ENCODE measurements at regions of chr12 and their contacts with region 1.

Region 1: DNA sequence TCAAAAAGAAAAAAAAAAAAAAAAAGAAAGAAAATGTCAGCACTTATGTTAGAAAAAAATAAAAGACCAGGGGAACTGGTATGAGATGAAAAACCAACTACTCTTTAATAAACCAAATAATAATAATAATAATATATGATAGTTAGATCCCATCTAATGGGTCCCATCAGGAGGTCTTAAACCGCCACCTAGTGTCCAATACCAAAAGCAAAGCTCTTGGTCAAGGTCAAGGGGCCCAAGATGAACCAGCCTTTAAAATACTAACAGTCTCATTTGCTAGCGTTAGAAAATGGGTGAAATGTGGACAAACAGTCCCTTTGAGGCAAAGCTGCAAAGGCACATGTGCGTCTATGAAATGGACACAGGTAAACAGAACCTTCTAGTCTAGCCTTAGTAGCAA is 12.3 kb downstream of the BRAP start:
- DNase-seq: peak in 1 of 5 donors; percentile 26
- H3K4me3 ChIP-seq: no peak overlapping the region
- H3K27ac ChIP-seq: no peak overlapping the region
- H3K4me1 ChIP-seq: no peaks in the 10 kb centered on the region
- H3K27me3 ChIP-seq: no peaks in the 10 kb centered on the region
- CTCF ChIP-seq: peak in 2 of 3 donors; percentile 27 to 31
- EP300 ChIP-seq: no peak
- POLR2A ChIP-seq: no peak

Region 2: DNA sequence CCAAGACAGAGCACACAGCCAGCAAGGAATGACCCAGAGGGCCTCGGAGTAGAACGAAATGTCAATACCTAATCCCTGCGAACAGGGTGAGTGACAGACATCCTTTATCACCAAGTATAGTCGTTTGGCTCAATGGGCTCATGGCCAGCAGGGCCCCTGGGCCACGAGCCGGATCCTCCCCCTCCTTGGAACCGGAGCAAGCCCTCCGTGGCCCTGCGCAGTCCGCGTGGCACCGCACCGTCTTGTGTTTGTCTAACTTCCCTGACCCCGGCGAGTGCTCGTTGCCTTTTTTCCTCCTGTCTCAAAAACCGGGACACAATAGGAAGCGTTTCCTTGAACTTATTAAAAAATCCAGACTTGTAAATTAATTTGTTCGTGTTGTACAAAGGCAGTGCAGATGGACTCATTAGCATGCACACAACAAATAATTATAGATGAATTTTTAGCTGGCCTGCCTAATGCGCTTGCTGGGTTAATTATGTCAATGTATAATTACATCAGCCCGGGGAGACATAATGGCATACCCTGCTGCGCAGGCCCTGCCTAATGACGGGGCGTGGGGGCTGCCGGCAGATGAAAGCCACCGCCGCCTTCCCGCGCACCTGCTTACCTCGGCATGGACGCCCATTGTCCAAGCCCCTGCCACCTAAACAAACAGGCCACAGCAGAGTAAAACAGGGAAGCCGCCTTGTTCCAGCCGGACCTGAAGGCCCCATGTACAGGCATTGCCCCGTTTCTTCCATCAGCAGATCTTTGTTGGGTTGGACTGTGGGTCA is 386.2 kb before region 1 on chr12:
- intact Hi-C with region 1: no loop called
- DNase-seq: no peak
- H3K4me3 ChIP-seq: no peak overlapping the region
- H3K27ac ChIP-seq: no peak overlapping the region
- H3K4me1 ChIP-seq: no peaks in the 10 kb centered on the region
- H3K27me3 ChIP-seq: no peaks in the 10 kb centered on the region
- CTCF ChIP-seq: no peak
- EP300 ChIP-seq: no peak
- POLR2A ChIP-seq: no peak

Region 3: DNA sequence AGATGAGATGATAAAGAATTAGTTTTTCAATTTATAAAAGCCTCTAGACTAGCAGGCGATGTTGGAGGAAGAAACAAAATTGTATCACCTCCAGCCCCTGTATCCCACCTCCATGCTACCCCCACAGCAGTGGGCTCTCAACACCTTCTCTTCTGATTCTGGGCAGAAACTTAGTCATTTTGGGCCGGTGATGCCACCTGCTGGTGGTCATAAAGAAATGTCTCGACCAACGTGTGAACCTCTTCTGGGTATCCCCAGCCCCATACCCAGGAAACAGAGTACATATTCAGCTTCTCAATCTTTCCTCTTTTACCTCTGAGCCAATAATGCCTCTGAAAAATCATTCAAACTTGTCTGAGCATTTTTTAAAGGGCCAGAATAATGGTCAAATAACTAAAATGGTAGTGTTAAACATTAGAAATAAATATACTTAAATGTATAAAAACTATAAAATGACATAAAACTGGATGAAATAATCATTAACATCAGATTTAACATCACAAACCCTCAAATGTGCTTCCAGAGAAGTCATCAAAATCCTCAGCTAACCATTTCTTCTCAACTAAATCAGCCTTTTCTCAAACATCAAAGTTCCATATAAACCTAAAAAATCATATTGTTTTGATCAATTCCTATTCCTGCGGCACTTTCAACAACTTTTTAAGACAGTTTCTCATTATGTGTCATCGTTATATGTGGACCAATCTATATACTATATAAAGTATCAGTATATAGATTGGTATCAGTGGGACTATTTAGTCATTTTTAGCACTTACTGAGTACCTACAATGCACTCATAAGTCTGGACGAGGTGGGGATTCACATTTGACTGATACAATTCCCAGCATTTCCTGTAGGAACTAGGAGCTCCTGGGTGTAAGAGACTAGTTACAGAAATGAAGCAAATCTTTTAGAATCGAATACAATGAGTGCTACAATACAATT is 143.8 kb before region 1 on chr12:
- intact Hi-C with region 1: loop called in 1 of 4 experiments (anchors 10 kb)
- DNase-seq: peak in 4 of 5 donors; percentile 32 to 54 (median 50)
- H3K4me3 ChIP-seq: no peak overlapping the region
- H3K27ac ChIP-seq: no peak overlapping the region
- H3K4me1 ChIP-seq: no peaks in the 10 kb centered on the region
- H3K27me3 ChIP-seq: no peaks in the 10 kb centered on the region
- CTCF ChIP-seq: peak in 2 of 3 donors; percentile 11 to 25
- EP300 ChIP-seq: no peak
- POLR2A ChIP-seq: no peak

Region 4: DNA sequence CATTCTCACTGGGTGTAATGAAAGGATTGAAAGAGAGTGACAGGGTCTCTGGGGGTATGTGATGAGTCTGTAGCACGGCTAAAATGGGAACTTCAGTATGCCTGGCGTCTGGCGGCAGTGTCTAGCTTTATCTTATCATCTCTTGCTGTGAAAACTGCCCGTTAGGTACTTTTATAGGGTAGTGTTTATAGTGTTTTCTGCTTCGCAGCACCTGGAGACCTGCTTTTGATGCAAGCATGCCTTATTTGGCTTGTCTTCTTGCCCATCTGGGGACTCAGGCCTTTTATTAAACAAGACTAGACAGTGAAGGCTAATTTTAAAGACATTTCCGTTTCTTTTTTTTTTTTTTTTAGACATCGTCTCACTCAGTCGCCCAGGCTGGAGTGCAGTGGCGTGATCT is 56.9 kb after region 1 on chr12:
- intact Hi-C with region 1: no loop called
- DNase-seq: no peak
- H3K4me3 ChIP-seq: no peak overlapping the region
- H3K27ac ChIP-seq: no peak overlapping the region
- H3K4me1 ChIP-seq: no peaks in the 10 kb centered on the region
- H3K27me3 ChIP-seq: no peaks in the 10 kb centered on the region
- CTCF ChIP-seq: no peak
- EP300 ChIP-seq: no peak
- POLR2A ChIP-seq: no peak

Region 5: GRCh38 chr12:111775205-111776193 is 102.0 kb after region 1 on chr12:
- intact Hi-C with region 1: no loop called
- DNase-seq: peak; percentile 79 to 86 (median 85)
- H3K4me3 ChIP-seq: no peak overlapping the region
- H3K27ac ChIP-seq: peak overlapping the region; percentile 67 to 86
- H3K4me1 ChIP-seq: peaks cover 29% of the 10 kb centered on the region
- H3K27me3 ChIP-seq: no peaks in the 10 kb centered on the region
- CTCF ChIP-seq: no peak
- EP300 ChIP-seq: no peak
- POLR2A ChIP-seq: no peak